ENCODE measurements at regions of chr2 and their contacts with region 1.

Region 1: DNA sequence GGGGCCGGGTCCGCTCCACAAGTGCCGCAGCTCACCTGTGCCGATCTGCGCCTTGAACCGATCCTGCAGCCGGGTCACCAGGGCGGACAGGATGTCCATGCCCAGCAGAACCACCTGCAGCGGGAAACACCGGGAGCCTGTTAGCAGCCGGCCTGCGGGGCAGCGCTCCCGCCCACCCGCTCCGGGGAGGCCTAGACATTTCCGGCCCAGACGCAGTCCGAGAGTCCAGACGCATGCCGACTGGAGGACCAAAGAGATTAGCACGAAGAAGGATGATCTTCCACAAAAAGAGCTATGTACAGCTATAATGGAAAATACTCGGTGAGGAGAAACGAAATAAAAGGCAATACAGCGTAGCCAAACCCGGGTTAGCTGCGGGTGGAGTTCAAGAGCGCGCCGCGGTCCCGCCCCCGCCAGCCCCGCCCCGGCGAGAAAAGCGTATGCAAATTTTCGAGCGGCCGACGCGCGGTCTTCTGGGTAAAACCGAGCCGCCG is 421 bp upstream of the RNU4ATAC start:
- DNase-seq: peak; percentile 93
- ATAC-seq: peak; percentile 53
- H3K4me3 Mint-ChIP-seq: peak overlapping the region; percentile 82
- H3K27ac Mint-ChIP-seq: peak overlapping the region; percentile 90
- H3K4me1 Mint-ChIP-seq: peaks cover 60% of the 10 kb centered on the region
- H3K27me3 Mint-ChIP-seq: no peaks in the 10 kb centered on the region

Region 2: DNA sequence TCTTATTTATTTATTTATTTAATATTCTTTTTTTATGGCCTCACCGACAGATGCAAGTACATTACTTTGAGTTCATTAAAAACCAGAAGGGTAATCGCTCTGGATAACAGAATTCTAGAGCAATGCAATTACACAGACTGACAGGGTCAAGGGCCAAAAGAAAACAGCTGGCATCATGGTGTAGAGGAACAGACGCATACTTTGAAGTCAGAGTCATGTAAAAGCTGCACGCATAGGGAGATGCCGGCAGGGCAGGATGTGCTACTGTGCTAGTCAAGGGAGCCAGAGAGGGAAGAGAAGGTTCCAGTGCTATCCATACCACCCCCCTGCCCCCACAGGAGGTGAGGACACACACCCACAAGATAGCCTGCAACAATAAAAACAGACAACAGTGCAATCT is 130.1 kb before region 1 on chr2:
- CTCF ChIA-PET with region 1: interaction called, 3 read pairs
- POLR2A ChIA-PET with region 1: no interaction called
- intact Hi-C with region 1: loop called in 1 of 2 experiments (anchors 10 kb)
- DNase-seq: no peak
- ATAC-seq: no peak
- H3K4me3 Mint-ChIP-seq: no peak overlapping the region
- H3K27ac Mint-ChIP-seq: no peak overlapping the region
- H3K4me1 Mint-ChIP-seq: peaks cover 2% of the 10 kb centered on the region
- H3K27me3 Mint-ChIP-seq: no peaks in the 10 kb centered on the region

Region 3: DNA sequence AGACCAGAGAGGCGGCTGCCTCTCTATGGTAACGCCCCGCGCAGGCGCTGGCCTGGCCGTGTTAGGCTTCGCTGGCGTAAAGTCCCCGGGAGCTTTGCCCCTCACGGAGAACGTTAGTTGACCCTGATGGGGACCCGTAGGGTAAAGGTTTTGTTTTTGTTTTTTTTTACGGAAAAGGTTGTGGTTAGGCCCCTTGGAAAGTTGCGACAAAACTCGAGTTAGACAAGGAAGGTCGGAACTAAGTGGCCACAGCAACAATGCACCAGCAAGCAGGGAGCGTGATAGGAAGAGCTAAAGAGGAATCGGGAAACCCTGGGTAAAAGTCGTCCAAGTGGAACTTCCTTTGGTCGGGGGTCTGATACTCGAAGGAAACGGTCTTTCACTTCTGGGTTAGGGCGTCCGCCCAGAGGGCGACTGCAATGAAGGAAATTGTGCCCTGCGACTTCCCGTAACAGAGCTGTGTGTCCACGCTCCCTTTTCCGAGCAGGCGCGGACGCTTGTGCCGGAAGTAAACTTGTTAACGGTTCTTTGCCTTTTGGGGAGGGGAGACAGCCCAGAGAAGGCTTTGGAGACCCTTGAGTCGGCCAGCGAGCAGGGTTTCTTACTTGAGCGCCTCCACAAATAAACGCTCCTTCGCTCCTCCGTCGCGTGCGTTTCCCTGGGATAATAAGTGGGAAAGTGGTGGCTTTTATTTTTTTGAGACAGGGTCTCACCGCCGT is 119.5 kb after region 1 on chr2:
- CTCF ChIA-PET with region 1: interaction called, 22 read pairs
- POLR2A ChIA-PET with region 1: interaction called, 84 read pairs
- intact Hi-C with region 1: loop called (anchors 1 kb)
- DNase-seq: peak; percentile 97
- ATAC-seq: peak; percentile 95
- H3K4me3 Mint-ChIP-seq: peak overlapping the region; percentile 89
- H3K27ac Mint-ChIP-seq: peak overlapping the region; percentile 100
- H3K4me1 Mint-ChIP-seq: peaks cover 61% of the 10 kb centered on the region
- H3K27me3 Mint-ChIP-seq: no peaks in the 10 kb centered on the region

Region 4: DNA sequence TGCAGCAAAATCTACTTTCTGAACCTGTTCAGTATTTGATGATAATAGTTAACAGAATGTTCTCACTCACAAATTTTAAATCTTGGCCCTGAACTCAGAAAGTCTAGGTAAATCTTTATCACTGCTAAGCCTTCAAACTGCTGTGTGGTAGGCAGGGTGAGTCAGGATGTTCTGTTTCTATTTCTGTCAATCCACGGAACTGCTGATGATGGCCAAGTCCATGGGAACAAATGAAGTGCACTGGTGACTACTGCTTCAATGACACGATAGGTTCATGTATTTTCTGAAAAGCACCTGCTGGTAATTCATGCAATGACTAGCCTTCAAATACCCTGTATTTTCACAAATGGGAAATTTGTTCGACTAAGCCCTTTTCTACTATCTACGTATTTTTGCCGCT is 192.2 kb after region 1 on chr2:
- CTCF ChIA-PET with region 1: interaction called, 9 read pairs
- POLR2A ChIA-PET with region 1: interaction called, 24 read pairs
- intact Hi-C with region 1: loop called (anchors 1 kb)
- DNase-seq: peak; percentile 68
- ATAC-seq: peak; percentile 92
- H3K4me3 Mint-ChIP-seq: peak overlapping the region; percentile 45
- H3K27ac Mint-ChIP-seq: peak overlapping the region; percentile 96
- H3K4me1 Mint-ChIP-seq: peaks cover 30% of the 10 kb centered on the region
- H3K27me3 Mint-ChIP-seq: no peaks in the 10 kb centered on the region

Region 5: GRCh38 chr2:121755236-121756111 is 225.2 kb after region 1 on chr2 and contains the start of gene TSN:
- CTCF ChIA-PET with region 1: no interaction called
- POLR2A ChIA-PET with region 1: interaction called, 7 read pairs
- intact Hi-C with region 1: loop called (anchors 1 kb)
- DNase-seq: peak; percentile 99
- ATAC-seq: peak; percentile 100
- H3K4me3 Mint-ChIP-seq: peak within 1 kb of the TSS; percentile 98
- H3K27ac Mint-ChIP-seq: peak within 1 kb of the TSS; percentile 93
- H3K4me1 Mint-ChIP-seq: peaks cover 30% of the 10 kb centered on the region
- H3K27me3 Mint-ChIP-seq: no peaks in the 10 kb centered on the region
- total RNA-seq, gene TSN: 44.0 to 71.2 TPM

Measured in activated CD4-positive, alpha-beta T cell treated with anti-CD3 and anti-CD28 coated beads for 36 hours (primary cell).